Dorsolateral prefrontal cortex (tissue), 120 donors: ENCODE measurements at regions of chr20 and their contacts with region 1.

Region 1: DNA sequence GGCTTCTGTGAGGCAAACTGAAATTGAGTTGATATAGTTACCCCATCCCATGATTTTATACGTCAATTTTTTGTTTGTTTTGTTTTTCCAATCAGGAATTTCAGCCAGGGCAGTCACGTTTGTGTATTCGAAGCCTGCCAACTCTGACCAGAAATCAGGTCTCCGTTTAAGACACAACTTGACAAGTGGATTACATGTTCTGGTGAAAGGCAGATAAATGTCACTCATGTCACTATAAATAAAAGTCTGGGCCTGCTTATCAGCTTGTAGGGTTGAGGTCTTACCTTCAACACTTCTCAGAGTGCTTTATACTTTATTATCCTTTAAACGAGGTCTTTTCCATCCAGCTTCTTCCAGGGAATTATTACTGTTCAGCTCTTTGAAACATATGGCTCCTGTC is 8.4 kb upstream of the XRN2 start:
- DNase-seq: no peak
- H3K4me3 ChIP-seq: no peak overlapping the region
- H3K27ac ChIP-seq: no peak overlapping the region
- H3K27me3 ChIP-seq: no peaks in the 10 kb centered on the region
- CTCF ChIP-seq: no peak

Region 2: DNA sequence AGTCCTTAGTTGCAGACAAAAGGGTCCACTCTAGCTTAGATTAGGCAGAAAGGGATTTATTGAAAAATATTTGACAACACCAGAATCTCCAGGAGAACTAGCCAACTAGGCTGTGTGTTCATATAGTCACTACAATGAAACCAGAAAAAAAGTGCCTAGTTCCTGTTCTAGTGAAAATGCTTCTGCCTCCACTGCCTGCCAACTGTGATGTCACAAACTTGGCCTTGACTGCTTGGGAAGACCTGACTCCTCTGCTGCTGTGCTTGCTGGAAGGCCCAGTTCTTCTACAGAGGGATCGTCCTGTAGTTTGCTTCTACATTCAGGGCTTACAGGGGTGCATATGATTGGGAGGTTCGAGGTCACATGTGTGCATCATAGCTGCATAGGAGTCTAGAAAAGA is 31.9 kb before region 1 on chr20:
- intact Hi-C with region 1: loop called in 1 of 2 experiments (anchors 5 kb)
- DNase-seq: no peak
- H3K4me3 ChIP-seq: no peak overlapping the region
- H3K27ac ChIP-seq: no peak overlapping the region
- H3K27me3 ChIP-seq: no peaks in the 10 kb centered on the region
- CTCF ChIP-seq: no peak